ENCODE measurements at regions of chr14 and their contacts with region 1.

Region 1: GRCh38 chr14:55327179-55327578 is 56.0 kb downstream of the FBXO34 start:
- DNase-seq: peak; percentile 16
- H3K4me3 Mint-ChIP-seq: no peak overlapping the region
- H3K27ac Mint-ChIP-seq: peak overlapping the region; percentile 42
- H3K4me1 Mint-ChIP-seq: peaks cover 65% of the 10 kb centered on the region
- H3K27me3 Mint-ChIP-seq: no peaks in the 10 kb centered on the region

Region 2: GRCh38 chr14:55228261-55228660 is 98.9 kb before region 1 on chr14:
- CTCF ChIA-PET with region 1: no interaction called
- intact Hi-C with region 1: no loop called
- DNase-seq: no peak
- H3K4me3 Mint-ChIP-seq: no peak overlapping the region
- H3K27ac Mint-ChIP-seq: no peak overlapping the region
- H3K4me1 Mint-ChIP-seq: no peaks in the 10 kb centered on the region
- H3K27me3 Mint-ChIP-seq: peaks cover 3% of the 10 kb centered on the region

Region 3: DNA sequence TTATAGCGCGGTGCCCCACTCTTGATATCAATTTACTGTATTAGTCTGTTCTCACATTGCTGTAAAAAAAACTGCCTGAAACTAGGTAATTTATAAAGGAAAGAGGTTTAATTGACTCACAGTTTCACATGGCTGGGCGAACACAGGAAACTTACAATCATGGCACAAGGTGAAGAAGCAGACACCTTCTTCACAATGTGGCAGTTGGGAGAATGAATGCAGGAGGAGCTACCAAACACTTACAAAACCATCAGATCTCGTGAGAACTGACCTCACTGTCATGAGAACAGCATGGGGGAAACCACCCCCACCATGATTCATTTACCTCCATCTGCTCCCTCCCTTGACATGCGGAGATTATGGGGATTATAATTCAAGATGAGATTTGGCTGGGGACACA is 13.7 kb before region 1 on chr14:
- CTCF ChIA-PET with region 1: no interaction called
- intact Hi-C with region 1: loop called (anchors 1 kb)
- DNase-seq: peak; percentile 52
- H3K4me3 Mint-ChIP-seq: no peak overlapping the region
- H3K27ac Mint-ChIP-seq: no peak overlapping the region
- H3K4me1 Mint-ChIP-seq: peaks cover 26% of the 10 kb centered on the region
- H3K27me3 Mint-ChIP-seq: no peaks in the 10 kb centered on the region

Region 4: GRCh38 chr14:55339770-55340169 is 12.6 kb after region 1 on chr14:
- CTCF ChIA-PET with region 1: no interaction called
- intact Hi-C with region 1: loop called (anchors 1 kb)
- DNase-seq: peak; percentile 40
- H3K4me3 Mint-ChIP-seq: no peak overlapping the region
- H3K27ac Mint-ChIP-seq: no peak overlapping the region
- H3K4me1 Mint-ChIP-seq: peaks cover 70% of the 10 kb centered on the region
- H3K27me3 Mint-ChIP-seq: no peaks in the 10 kb centered on the region

Measured in activated naive CD4-positive, alpha-beta T cell treated with anti-CD3 and anti-CD28 coated beads for 36 hours (primary cell).